GM12878 (cell line): ENCODE measurements at regions of chr6 and their contacts with region 1.

Region 1: GRCh38 chr6:134161036-134161435 is 108.6 kb upstream of the SLC2A12 start:
- DNase-seq: no peak
- ATAC-seq: no peak
- H3K4me3 ChIP-seq: no peak overlapping the region
- H3K27ac ChIP-seq: no peak overlapping the region
- H3K4me1 ChIP-seq: no peaks in the 10 kb centered on the region
- H3K27me3 ChIP-seq: no peaks in the 10 kb centered on the region
- CTCF ChIP-seq: no peak
- EP300 ChIP-seq: no peak
- POLR2A ChIP-seq: no peak
- RAD21 ChIP-seq: no peak

Region 2: DNA sequence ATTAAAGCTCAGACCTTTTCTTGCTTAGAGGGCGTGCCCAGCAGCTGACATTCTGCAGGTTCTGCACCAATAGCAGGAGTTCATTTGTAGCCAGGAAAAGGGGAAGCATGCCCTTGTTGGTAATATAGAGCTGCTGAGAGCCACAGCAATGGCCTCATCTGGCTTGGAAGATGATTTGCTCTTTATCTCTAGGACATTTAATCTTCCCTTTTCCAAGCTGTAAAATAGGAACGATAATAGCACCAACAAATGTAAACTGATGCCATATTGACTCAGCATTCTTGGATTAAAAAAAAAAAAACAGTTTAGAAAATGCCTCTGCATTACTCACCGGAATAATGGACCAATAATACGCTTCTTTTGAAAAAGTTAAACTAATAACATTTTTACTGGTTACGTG is 15.2 kb before region 1 on chr6:
- CTCF ChIA-PET with region 1: interaction called, 21 read pairs
- POLR2A ChIA-PET with region 1: no interaction called
- RAD21 ChIA-PET with region 1: no interaction called
- SMC1A ChIA-PET with region 1: interaction called, 3 read pairs
- in situ Hi-C with region 1: no loop called
- intact Hi-C with region 1: no loop called
- DNase-seq: no peak
- ATAC-seq: peak; percentile 63; the same call in 2 of the 3 replicates
- H3K4me3 ChIP-seq: no peak overlapping the region
- H3K27ac ChIP-seq: no peak overlapping the region
- H3K4me1 ChIP-seq: no peaks in the 10 kb centered on the region
- H3K27me3 ChIP-seq: no peaks in the 10 kb centered on the region
- CTCF ChIP-seq: no peak
- EP300 ChIP-seq: no peak
- POLR2A ChIP-seq: no peak
- RAD21 ChIP-seq: no peak

Region 3: DNA sequence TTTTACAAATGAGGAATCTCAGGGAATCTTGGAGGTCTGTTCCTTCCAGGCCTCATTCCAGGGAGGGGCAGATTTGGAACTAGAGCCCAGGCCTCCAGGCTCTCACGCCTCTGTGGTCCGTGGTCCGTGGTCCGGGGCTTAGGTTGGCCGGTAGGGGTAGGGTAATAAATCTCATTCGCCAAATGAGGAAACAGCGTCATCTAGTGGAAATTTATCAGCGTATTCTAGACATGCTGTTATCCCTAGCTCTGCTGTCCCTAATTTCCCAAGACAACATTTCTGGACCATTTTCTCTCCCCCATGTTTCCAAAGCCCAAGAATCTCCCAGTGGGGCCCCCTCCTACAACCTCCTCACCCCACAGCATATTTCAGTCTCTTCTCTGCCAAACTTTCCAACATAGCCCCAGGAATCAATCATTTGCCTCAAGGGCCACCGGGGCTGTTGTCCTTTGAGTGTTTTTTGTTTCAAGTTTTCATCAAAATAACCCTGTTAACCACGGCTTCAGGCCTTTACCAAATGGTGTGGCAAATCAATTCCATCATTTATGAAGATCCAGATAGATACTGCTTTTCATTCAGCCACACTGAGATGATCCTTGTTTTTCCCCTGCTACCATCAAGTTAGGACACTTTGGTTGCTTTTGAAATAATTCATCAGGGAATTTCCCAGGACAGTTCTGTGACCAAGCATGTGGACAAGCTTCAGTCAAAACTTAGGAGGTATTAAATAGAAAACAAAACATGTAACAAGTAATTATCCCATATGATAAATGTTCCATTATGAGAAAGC is 662.1 kb after region 1 on chr6:
- CTCF ChIA-PET with region 1: interaction called, 6 read pairs
- POLR2A ChIA-PET with region 1: no interaction called
- RAD21 ChIA-PET with region 1: interaction called, 7 read pairs
- SMC1A ChIA-PET with region 1: interaction called, 12 read pairs
- in situ Hi-C with region 1: loop called (anchors 5 kb)
- intact Hi-C with region 1: loop called (anchors 5 kb)
- DNase-seq: peak; percentile 36
- ATAC-seq: peak; percentile 95
- H3K4me3 ChIP-seq: no peak overlapping the region
- H3K27ac ChIP-seq: no peak overlapping the region
- H3K4me1 ChIP-seq: no peaks in the 10 kb centered on the region; the same call in 1 of the 2 replicates
- H3K27me3 ChIP-seq: no peaks in the 10 kb centered on the region
- CTCF ChIP-seq: peak; percentile 78 to 89 (median 80)
- EP300 ChIP-seq: no peak
- POLR2A ChIP-seq: no peak
- RAD21 ChIP-seq: peak; percentile 84

Region 4: GRCh38 chr6:134882426-134883038 is 721.5 kb after region 1 on chr6:
- CTCF ChIA-PET with region 1: interaction called, 3 read pairs
- POLR2A ChIA-PET with region 1: no interaction called
- RAD21 ChIA-PET with region 1: no interaction called
- SMC1A ChIA-PET with region 1: no interaction called
- in situ Hi-C with region 1: no loop called
- intact Hi-C with region 1: loop called (anchors 5 kb)
- DNase-seq: no peak
- ATAC-seq: peak; percentile 44; the same call in 2 of the 3 replicates
- H3K4me3 ChIP-seq: no peak overlapping the region
- H3K27ac ChIP-seq: no peak overlapping the region
- H3K4me1 ChIP-seq: no peaks in the 10 kb centered on the region
- H3K27me3 ChIP-seq: 0 out of 4 replicates have a peak, but pooled peaks cover 0 to 1% of the 10 kb centered on the region in 2 experiments
- CTCF ChIP-seq: peak; percentile 71 to 80 (median 76)
- EP300 ChIP-seq: no peak
- POLR2A ChIP-seq: no peak
- RAD21 ChIP-seq: peak; percentile 96